ENCODE measurements at regions of chr2 and their contacts with region 1.

Region 1: GRCh38 chr2:182132605-182133004 is 147.0 kb downstream of the PPP1R1C start:
- DNase-seq: no peak
- ATAC-seq: no peak
- H3K4me3 ChIP-seq: no peak overlapping the region
- H3K27ac ChIP-seq: no peak overlapping the region
- H3K4me1 ChIP-seq: 0 out of 4 replicates have a peak, but pooled peaks cover 0 to 6% of the 10 kb centered on the region in 2 experiments
- H3K27me3 ChIP-seq: no peaks in the 10 kb centered on the region
- CTCF ChIP-seq: peak; percentile 29 to 37 (median 30); a peak in 2 of 6 replicates
- POLR2A ChIP-seq: no peak
- RAD21 ChIP-seq: peak; percentile 72

Region 2: GRCh38 chr2:181077128-181077709 is 1055.4 kb before region 1 on chr2:
- CTCF ChIA-PET with region 1: no interaction called
- POLR2A ChIA-PET with region 1: no interaction called
- RAD21 ChIA-PET with region 1: no interaction called
- intact Hi-C with region 1: loop called (anchors 5 kb)
- DNase-seq: peak; percentile 22
- ATAC-seq: peak; percentile 84
- H3K4me3 ChIP-seq: no peak overlapping the region
- H3K27ac ChIP-seq: no peak overlapping the region
- H3K4me1 ChIP-seq: no peaks in the 10 kb centered on the region
- H3K27me3 ChIP-seq: no peaks in the 10 kb centered on the region
- CTCF ChIP-seq: peak; percentile 42 to 77 (median 63); a peak in 5 of 6 replicates
- POLR2A ChIP-seq: no peak
- RAD21 ChIP-seq: peak; percentile 73

Region 3: GRCh38 chr2:182077451-182078142 is 55.0 kb before region 1 on chr2:
- CTCF ChIA-PET with region 1: no interaction called
- POLR2A ChIA-PET with region 1: no interaction called
- RAD21 ChIA-PET with region 1: no interaction called
- intact Hi-C with region 1: no loop called
- DNase-seq: peak; percentile 81
- ATAC-seq: peak; percentile 85
- H3K4me3 ChIP-seq: no peak overlapping the region
- H3K27ac ChIP-seq: peak overlapping the region; percentile 26; the same call in 1 of the 2 replicates
- H3K4me1 ChIP-seq: peaks cover 12% of the 10 kb centered on the region in 2 experiments
- H3K27me3 ChIP-seq: no peaks in the 10 kb centered on the region
- CTCF ChIP-seq: peak; percentile 59 to 77 (median 75); a peak in 5 of 6 replicates
- POLR2A ChIP-seq: no peak
- RAD21 ChIP-seq: peak; percentile 94